Endothelial cell of umbilical vein (primary cell): ENCODE measurements at regions of chr10 and their contacts with region 1.

Region 1: GRCh38 chr10:48551861-48552591 is 52.8 kb downstream of the ARHGAP22 start:
- DNase-seq: peak; percentile 68
- H3K4me3 ChIP-seq: no peak overlapping the region
- H3K27ac ChIP-seq: peak overlapping the region; percentile 45
- H3K4me1 ChIP-seq: peaks cover 37% of the 10 kb centered on the region
- H3K27me3 ChIP-seq: no peaks in the 10 kb centered on the region
- CTCF ChIP-seq: peak; percentile 66 to 77
- POLR2A ChIP-seq: no peak

Region 2: GRCh38 chr10:48523820-48524758 is 27.9 kb before region 1 on chr10:
- CTCF ChIA-PET with region 1: interaction called, 3 read pairs
- POLR2A ChIA-PET with region 1: no interaction called
- dilution Hi-C with region 1: no loop called
- intact Hi-C with region 1: loop called (anchors 2 kb)
- DNase-seq: no peak
- H3K4me3 ChIP-seq: peak overlapping the region in 2 of 3 experiments; percentile 30 to 54
- H3K27ac ChIP-seq: no peak overlapping the region
- H3K4me1 ChIP-seq: peaks cover 33% of the 10 kb centered on the region
- H3K27me3 ChIP-seq: no peaks in the 10 kb centered on the region
- CTCF ChIP-seq: peak; percentile 69 to 77
- POLR2A ChIP-seq: no peak

Region 3: DNA sequence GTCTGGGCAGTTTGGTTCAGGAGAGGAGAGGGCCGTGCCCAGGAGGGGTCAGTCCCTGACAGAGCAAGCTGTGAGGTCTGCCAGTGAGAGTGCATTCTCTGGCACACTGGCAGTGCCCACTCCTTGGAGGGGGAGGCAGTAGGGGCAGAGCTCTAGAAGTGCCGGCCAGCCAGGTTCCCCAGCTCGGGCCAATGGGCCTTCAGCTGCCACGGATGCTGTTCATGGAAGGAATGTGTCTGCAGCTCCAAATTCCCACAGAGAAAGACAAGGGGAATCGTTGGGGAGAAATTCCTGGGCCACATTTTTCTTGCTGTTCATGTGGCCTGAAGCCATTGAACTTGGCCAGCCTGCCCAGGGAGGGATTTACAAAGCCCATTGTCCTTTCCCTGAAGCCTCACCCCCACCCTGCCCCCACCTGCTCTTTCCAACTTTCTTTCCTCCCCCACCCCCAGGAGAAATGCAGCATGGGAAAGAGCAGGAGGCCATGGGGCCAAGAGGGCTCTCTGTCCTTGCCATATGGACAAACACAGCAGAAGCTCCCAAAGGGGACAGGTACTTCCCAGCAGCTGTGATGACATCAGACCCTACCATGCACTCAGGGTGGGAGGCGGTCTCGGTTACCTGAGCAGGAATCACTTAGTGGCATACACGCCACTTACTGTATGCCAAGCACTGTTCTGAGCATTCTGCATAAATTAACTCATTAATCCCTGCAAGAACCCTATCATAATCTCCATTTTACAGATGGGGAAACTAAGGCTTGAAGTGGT is 17.9 kb before region 1 on chr10:
- CTCF ChIA-PET with region 1: interaction called, 14 read pairs
- POLR2A ChIA-PET with region 1: no interaction called
- dilution Hi-C with region 1: no loop called
- intact Hi-C with region 1: no loop called
- DNase-seq: no peak
- H3K4me3 ChIP-seq: no peak overlapping the region
- H3K27ac ChIP-seq: no peak overlapping the region
- H3K4me1 ChIP-seq: no peaks in the 10 kb centered on the region
- H3K27me3 ChIP-seq: no peaks in the 10 kb centered on the region
- CTCF ChIP-seq: no peak
- POLR2A ChIP-seq: no peak

Region 4: DNA sequence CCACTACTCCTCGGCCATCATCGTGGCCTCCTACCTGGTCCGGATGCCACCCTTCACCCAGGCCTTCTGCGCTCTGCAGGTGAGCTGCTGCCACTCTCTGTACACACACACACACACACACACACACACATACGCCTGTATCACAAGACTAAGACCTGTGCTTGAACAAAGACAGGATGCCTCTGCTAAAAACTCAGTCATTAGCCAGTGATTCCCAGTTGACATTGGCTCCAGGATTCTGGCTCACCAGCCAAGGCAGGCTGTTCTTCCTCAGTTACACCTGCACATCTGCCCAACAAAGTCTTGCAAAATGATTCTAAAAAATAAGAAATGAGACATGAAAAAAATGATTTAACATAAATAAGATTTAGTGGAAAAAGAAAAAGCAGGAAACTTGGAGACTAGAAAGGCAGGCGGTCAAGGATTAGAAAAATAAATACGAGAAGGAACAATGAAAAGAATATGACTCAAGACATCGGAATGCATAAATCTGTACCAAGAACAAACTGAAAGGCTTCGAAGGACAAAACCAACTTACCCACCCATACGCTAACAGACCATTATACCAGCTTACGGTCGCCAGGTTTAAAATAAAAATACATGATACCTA is 395.0 kb after region 1 on chr10:
- CTCF ChIA-PET with region 1: no interaction called
- POLR2A ChIA-PET with region 1: no interaction called
- dilution Hi-C with region 1: no loop called
- intact Hi-C with region 1: loop called (anchors 1 kb)
- DNase-seq: peak; percentile 91
- H3K4me3 ChIP-seq: no peak overlapping the region
- H3K27ac ChIP-seq: peak overlapping the region; percentile 74
- H3K4me1 ChIP-seq: peaks cover 32% of the 10 kb centered on the region
- H3K27me3 ChIP-seq: no peaks in the 10 kb centered on the region
- CTCF ChIP-seq: no peak
- POLR2A ChIP-seq: no peak